ENCODE measurements at regions of chr3 and their contacts with region 1.

Region 1: DNA sequence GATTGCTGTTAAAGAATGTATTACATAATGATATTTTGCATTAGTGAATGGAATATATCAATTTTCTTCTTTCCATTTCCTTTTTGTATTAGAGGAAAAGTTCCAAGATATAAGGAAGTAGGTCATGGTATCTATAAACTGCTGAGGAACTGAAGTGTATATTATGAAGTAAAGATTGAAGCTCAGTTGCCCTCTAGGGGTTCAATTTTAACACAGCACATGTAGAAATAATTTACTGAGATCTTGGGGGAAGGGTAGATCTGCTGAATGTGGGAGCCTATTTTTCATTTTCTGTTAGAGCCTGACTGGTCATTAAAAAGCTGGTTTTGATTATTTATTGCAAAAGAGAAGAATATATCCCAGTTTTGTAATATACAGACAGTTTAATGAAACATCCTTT is 45.2 kb downstream of the CMC1 start:
- DNase-seq: peak in 6 of 9 donors; percentile 12 to 48 (median 36)
- ATAC-seq: peak; percentile 85
- H3K4me3 ChIP-seq: no peak overlapping the region
- H3K4me3 Mint-ChIP-seq: peak overlapping the region in 1 of 10 donors; percentile 66
- H3K27ac ChIP-seq: no peak overlapping the region
- H3K27ac Mint-ChIP-seq: no peak overlapping the region
- H3K4me1 ChIP-seq: peaks cover 0 to 10% of the 10 kb centered on the region in 2 donors
- H3K4me1 Mint-ChIP-seq: peaks cover 2 to 27% (median 13%) of the 10 kb centered on the region in 7 donors
- H3K27me3 ChIP-seq: no peaks in the 10 kb centered on the region
- H3K27me3 Mint-ChIP-seq: no peaks in the 10 kb centered on the region

Region 2: GRCh38 chr3:27880969-27881892 is 405.4 kb before region 1 on chr3:
- CTCF ChIA-PET with region 1: no interaction called
- POLR2A ChIA-PET with region 1: no interaction called
- intact Hi-C with region 1: loop called in 1 of 2 experiments (anchors 1 kb)
- DNase-seq: peak in 8 of 9 donors; percentile 24 to 75 (median 62)
- ATAC-seq: peak; percentile 87
- H3K4me3 ChIP-seq: peak overlapping the region; percentile 43
- H3K4me3 Mint-ChIP-seq: peak overlapping the region; percentile 82 to 94 (median 89)
- H3K27ac ChIP-seq: peak overlapping the region; percentile 75
- H3K27ac Mint-ChIP-seq: peak overlapping the region; percentile 91 to 99 (median 97)
- H3K4me1 ChIP-seq: peaks cover 28 to 47% of the 10 kb centered on the region in 2 donors
- H3K4me1 Mint-ChIP-seq: peaks cover 39 to 85% (median 73%) of the 10 kb centered on the region in 7 donors
- H3K27me3 ChIP-seq: no peaks in the 10 kb centered on the region
- H3K27me3 Mint-ChIP-seq: peaks cover 0 to 4% (median 0%) of the 10 kb centered on the region in 5 donors

Region 3: GRCh38 chr3:27943106-27943505 is 343.5 kb before region 1 on chr3:
- CTCF ChIA-PET with region 1: no interaction called
- POLR2A ChIA-PET with region 1: no interaction called
- intact Hi-C with region 1: loop called in 1 of 2 experiments (anchors 1 kb)
- DNase-seq: peak in 3 of 9 donors; percentile 2 to 12 (median 3)
- ATAC-seq: no peak
- H3K4me3 ChIP-seq: no peak overlapping the region
- H3K4me3 Mint-ChIP-seq: no peak overlapping the region
- H3K27ac ChIP-seq: no peak overlapping the region
- H3K27ac Mint-ChIP-seq: no peak overlapping the region
- H3K4me1 ChIP-seq: no peaks in the 10 kb centered on the region
- H3K4me1 Mint-ChIP-seq: peaks cover 0 to 12% (median 4%) of the 10 kb centered on the region in 7 donors
- H3K27me3 ChIP-seq: no peaks in the 10 kb centered on the region
- H3K27me3 Mint-ChIP-seq: no peaks in the 10 kb centered on the region

Region 4: DNA sequence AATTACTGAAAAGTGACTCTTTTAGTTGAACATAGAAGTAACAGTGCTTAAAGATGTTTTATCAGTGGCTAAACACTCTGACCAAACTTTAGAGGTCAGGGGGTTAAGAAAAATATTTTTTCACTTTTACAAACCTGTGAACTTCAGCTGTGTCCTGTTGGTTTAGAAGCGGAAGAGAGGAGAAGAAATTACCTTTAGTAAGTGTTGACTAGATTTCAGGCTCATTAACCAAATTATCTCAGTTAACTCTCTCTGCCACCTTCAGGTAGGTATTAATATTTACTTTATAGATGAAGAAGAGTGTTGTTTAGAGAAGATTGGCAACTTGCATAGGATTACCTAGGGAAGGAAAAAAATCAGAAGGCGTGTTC is 197.1 kb before region 1 on chr3:
- CTCF ChIA-PET with region 1: no interaction called
- POLR2A ChIA-PET with region 1: no interaction called
- intact Hi-C with region 1: loop called in 1 of 2 experiments (anchors 5 kb)
- DNase-seq: peak in 5 of 9 donors; percentile 0 to 18 (median 8)
- ATAC-seq: no peak
- H3K4me3 ChIP-seq: no peak overlapping the region
- H3K4me3 Mint-ChIP-seq: peak overlapping the region in 1 of 10 donors; percentile 12
- H3K27ac ChIP-seq: no peak overlapping the region
- H3K27ac Mint-ChIP-seq: no peak overlapping the region
- H3K4me1 ChIP-seq: no peaks in the 10 kb centered on the region
- H3K4me1 Mint-ChIP-seq: peaks cover 0 to 10% (median 0%) of the 10 kb centered on the region in 7 donors
- H3K27me3 ChIP-seq: no peaks in the 10 kb centered on the region
- H3K27me3 Mint-ChIP-seq: no peaks in the 10 kb centered on the region

Region 5: DNA sequence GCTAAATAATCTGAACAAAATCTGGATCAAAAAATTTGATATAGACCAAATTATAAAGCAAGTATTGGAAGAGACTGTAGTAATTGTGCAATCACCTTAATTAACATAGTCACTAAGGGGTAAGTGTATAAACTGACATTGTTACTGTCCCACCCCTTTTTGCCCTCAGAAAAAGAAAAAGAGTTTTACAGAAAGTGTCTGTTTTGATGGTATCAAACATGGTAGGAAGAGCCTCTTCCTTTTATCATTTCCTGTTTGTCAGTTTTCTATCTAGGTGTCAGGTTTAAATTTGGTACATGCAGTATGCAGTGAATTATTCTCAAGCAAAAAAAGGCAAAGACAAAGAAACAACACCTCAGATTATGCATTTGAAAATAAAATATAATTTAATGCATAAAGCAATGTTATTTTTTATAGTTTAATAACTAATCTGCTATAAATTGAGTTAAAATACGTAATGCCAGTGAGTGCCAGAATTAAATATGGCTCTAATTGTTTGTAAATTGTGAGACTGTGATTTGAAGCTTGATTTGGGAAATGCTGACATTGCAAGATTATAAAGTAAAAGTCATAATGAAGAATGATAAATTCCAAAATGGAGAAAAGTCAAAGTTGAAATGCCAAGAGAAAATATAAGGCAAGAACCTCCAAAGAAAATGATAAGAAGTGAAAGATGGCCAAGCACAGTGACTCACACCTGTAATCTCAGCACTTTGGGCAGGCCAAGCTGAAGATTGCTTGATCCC is 75.5 kb before region 1 on chr3:
- CTCF ChIA-PET with region 1: no interaction called
- POLR2A ChIA-PET with region 1: no interaction called
- intact Hi-C with region 1: loop called in 1 of 2 experiments (anchors 2 kb)
- DNase-seq: peak in 6 of 9 donors; percentile 33 to 69 (median 54)
- ATAC-seq: peak; percentile 83
- H3K4me3 ChIP-seq: no peak overlapping the region
- H3K4me3 Mint-ChIP-seq: peak overlapping the region in 9 of 10 donors; percentile 30 to 80 (median 66)
- H3K27ac ChIP-seq: no peak overlapping the region
- H3K27ac Mint-ChIP-seq: peak overlapping the region; percentile 15 to 90 (median 68)
- H3K4me1 ChIP-seq: peaks cover 9 to 24% of the 10 kb centered on the region in 2 donors
- H3K4me1 Mint-ChIP-seq: peaks cover 11 to 47% (median 34%) of the 10 kb centered on the region in 7 donors
- H3K27me3 ChIP-seq: no peaks in the 10 kb centered on the region
- H3K27me3 Mint-ChIP-seq: no peaks in the 10 kb centered on the region

Region 6: DNA sequence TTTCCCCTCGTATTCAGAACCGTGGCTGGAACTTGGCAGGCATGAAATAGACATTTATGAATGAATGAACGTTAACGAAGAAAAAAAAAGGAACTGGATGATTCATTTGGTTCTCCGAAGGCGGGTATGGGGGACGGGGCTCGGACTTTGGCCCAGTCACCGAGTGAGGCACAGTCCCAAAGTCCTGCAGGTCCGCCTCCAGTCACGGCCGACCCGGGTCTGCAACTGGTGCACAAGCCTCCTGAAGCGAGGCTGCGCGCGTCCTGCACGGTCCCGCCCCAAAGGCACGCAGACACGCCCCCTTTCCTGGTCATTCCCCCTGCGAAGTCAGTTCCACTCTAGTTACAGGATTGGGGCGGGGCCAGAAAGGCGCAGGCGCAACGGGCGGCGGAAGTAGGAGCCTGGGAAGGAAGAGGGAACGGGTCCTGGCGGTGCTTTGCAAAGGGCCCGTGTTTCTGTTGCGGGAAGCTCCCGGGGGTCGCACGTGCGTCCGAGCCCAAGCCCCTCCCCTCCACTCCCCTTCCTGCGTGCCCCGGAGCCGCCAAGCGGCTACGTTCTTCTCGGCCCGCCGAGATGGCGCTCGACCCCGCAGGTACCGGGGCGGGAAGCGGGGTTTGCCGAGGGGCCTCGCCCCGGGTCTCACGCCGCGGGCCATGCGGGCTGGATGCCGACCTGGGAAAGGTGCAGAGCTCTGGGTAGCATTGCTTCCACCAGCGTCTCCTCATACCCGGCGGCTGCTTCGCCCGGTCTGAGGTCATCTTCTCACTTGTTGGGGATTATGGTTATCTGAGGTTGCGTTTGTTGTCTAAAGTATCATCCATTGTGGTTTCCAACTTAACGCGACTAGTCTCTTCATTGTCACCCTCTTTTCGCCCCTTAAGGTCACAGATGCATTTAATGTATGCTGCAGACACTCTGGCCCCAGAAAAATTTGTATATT is 45.1 kb before region 1 on chr3 and contains the start of gene CMC1:
- CTCF ChIA-PET with region 1: no interaction called
- POLR2A ChIA-PET with region 1: no interaction called
- intact Hi-C with region 1: loop called in 1 of 2 experiments (anchors 1 kb)
- DNase-seq: peak; percentile 69 to 93 (median 83)
- ATAC-seq: peak; percentile 95
- H3K4me3 ChIP-seq: peak within 1 kb of the TSS; percentile 71
- H3K4me3 Mint-ChIP-seq: peak within 1 kb of the TSS; percentile 88 to 97 (median 96)
- H3K27ac ChIP-seq: peak within 1 kb of the TSS; percentile 71
- H3K27ac Mint-ChIP-seq: peak within 1 kb of the TSS; percentile 85 to 96 (median 94)
- H3K4me1 ChIP-seq: peaks cover 16 to 40% of the 10 kb centered on the region in 2 donors
- H3K4me1 Mint-ChIP-seq: peaks cover 32 to 77% (median 60%) of the 10 kb centered on the region in 7 donors
- H3K27me3 ChIP-seq: no peaks in the 10 kb centered on the region
- H3K27me3 Mint-ChIP-seq: no peaks in the 10 kb centered on the region
- total RNA-seq, gene CMC1: 11.0 to 25.1 (median 13.9) TPM

Region 7: DNA sequence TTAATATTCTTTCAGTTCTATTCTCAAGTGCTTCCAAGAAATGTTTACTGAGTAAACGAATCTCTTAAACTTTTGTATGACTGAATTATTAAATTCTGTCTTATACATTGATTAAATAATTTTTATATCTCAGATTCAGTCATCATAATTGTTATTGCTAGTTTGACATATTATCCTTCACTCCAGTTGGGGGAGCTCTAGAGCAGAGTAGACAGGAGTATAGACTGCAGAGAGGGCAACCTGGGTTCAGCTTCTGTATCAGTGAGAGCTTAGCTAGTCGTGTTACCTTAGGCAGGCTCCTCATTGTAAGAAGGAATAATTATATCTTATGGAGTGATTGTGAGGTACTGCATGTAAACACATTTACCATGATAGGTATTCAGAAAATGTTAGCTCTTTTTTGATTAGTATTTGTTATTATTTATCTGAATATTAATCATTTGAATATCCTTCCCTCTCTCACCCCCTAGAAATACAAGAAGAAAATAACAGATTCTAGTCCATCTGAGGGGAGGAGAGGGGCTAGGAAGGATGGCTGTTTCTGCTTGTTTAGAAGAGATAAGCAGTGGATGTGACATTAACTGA is 30.9 kb after region 1 on chr3:
- CTCF ChIA-PET with region 1: no interaction called
- POLR2A ChIA-PET with region 1: no interaction called
- intact Hi-C with region 1: loop called in 1 of 2 experiments (anchors 2 kb)
- DNase-seq: peak in 7 of 9 donors; percentile 7 to 47 (median 34)
- ATAC-seq: peak; percentile 95
- H3K4me3 ChIP-seq: no peak overlapping the region
- H3K4me3 Mint-ChIP-seq: no peak overlapping the region
- H3K27ac ChIP-seq: no peak overlapping the region
- H3K27ac Mint-ChIP-seq: no peak overlapping the region
- H3K4me1 ChIP-seq: no peaks in the 10 kb centered on the region
- H3K4me1 Mint-ChIP-seq: peaks cover 0 to 19% (median 6%) of the 10 kb centered on the region in 7 donors
- H3K27me3 ChIP-seq: no peaks in the 10 kb centered on the region
- H3K27me3 Mint-ChIP-seq: no peaks in the 10 kb centered on the region

Measured in naive thymus-derived CD4-positive, alpha-beta T cell (primary cell).